T-cell (primary cell): ENCODE measurements at regions of chr5 and their contacts with region 1.

Region 1: DNA sequence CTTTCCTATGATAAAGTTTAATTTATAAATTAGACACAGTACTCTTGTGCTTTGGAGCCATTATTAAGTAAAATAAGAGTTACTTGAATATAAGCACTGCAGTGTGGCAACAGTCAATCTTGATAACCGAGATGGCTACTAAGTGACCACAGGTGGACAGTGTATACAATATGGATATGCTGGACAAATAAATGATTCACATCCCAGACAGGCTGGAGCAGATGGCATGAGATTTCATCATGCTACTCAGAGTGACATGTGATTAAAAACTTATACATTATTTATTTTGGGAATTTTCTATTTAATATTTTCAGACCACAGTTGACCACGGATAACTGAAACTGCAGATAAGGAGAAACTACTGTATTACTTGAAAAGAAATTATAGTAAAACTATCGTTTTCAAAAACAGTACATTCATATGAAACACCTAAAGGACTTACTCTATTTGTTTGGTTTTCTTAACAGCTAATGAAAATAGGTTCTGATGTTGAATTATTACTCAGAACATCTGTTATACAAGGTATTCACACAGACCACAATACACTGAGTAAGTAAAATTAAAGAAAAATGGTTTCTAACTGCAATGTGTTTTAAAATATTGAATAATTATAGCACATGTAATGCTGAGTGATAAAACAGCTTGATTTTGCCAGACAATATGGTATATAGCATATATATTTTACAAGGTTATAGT is 16.0 kb downstream of the LYRM7 start:
- DNase-seq: no peak
- ATAC-seq: no peak
- H3K4me3 ChIP-seq: no peak overlapping the region
- H3K4me3 Mint-ChIP-seq: no peak overlapping the region
- H3K27ac ChIP-seq: no peak overlapping the region
- H3K27ac Mint-ChIP-seq: no peak overlapping the region
- H3K4me1 ChIP-seq: no peaks in the 10 kb centered on the region
- H3K4me1 Mint-ChIP-seq: peaks cover 2 to 10% (median 6%) of the 10 kb centered on the region in 3 donors
- H3K27me3 ChIP-seq: no peaks in the 10 kb centered on the region
- H3K27me3 Mint-ChIP-seq: no peaks in the 10 kb centered on the region

Region 2: DNA sequence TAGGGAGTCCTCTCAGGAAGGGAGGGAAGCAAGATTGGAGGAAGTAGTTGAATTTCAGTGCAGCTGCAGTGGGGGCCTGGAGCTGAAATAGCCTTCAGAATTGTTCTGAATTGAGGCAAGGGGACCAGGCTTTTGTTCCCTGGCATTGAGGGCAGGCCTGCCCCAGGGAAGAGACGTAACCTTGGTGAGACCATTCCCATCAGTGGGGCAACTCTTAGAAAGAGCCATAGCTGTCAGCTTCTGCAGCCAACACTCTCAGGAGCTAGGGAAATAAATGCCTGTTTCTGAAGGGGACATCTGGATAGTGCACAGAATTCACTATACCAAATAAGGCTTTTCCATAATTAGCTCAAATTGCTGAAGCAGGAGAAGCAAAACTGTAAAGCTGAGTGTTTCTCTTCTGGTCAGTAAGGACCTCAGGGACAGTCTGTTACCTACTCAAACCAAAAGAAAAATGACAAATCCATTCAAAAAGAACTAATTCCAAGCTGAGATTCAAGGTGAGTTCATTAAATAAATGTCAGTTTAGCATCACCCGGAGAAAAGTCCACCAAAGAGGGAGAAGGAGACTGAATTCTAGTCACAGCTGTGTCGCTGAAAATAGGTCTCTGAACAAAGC is 28.0 kb after region 1 on chr5:
- CTCF ChIA-PET with region 1: no interaction called
- POLR2A ChIA-PET with region 1: interaction called in 1 of 2 experiments, 12 read pairs
- DNase-seq: no peak
- ATAC-seq: no peak
- H3K4me3 ChIP-seq: no peak overlapping the region
- H3K4me3 Mint-ChIP-seq: no peak overlapping the region
- H3K27ac ChIP-seq: no peak overlapping the region
- H3K27ac Mint-ChIP-seq: peak overlapping the region; percentile 16 to 31
- H3K4me1 ChIP-seq: peaks cover 20 to 21% of the 10 kb centered on the region in 2 experiments
- H3K4me1 Mint-ChIP-seq: peaks cover 40 to 64% (median 55%) of the 10 kb centered on the region in 3 donors
- H3K27me3 ChIP-seq: no peaks in the 10 kb centered on the region
- H3K27me3 Mint-ChIP-seq: no peaks in the 10 kb centered on the region